B cell (primary cell): ENCODE measurements at regions of chr10 and their contacts with region 1.

Region 1: DNA sequence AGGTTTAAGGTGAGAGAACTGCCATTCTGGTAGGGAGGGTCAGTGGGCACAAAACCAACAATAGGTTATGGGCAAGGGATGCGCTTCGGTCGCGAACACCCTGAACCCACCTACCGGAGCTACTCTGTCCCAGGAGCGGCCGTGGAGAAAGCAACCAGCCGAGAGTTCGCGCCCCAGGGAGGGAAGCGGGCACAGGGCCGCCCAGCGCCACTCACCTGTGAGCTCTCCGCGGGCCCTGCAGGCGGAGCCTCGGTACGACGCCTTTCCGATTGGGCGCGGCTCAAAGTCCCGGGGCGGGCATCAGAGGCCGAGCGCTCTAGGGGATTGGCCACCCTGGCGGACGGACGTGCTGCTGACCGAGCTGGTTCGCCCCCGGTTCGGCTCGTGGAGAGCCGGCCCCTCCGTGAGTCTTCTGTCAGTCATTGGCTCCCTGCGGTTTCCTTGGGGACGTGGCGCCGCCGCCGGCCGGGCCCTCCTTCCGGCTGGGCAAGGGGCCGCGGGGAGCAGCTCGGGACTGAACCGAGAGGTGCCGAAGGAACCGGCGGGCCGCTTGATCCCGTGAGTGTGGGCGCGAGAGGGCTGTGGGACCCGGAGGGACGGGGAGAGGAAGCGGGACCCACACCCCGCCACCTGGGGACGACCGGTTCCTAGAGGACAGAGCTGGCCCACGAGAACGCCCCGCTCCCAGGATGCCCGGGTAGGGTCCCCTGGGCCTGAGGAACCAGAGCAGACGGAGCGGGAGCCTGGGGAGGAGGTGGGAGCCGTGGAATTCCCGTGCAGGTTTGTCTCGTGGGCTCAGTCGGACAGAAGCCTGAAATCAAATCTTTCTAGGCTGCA is at the start of gene ENTPD7:
- DNase-seq: peak; percentile 91
- ATAC-seq: peak; percentile 99
- H3K4me3 ChIP-seq: peak within 1 kb of the TSS; percentile 63 to 89 (median 82)
- H3K4me3 Mint-ChIP-seq: peak within 1 kb of the TSS; percentile 84
- H3K27ac ChIP-seq: peak within 1 kb of the TSS in 1 of 2 donors; percentile 64
- H3K27ac Mint-ChIP-seq: peak within 1 kb of the TSS; percentile 32
- H3K4me1 ChIP-seq: peaks cover 7 to 16% of the 10 kb centered on the region in 2 donors
- H3K4me1 Mint-ChIP-seq: peaks cover 19% of the 10 kb centered on the region
- H3K27me3 ChIP-seq: peaks cover 0 to 4% (median 0%) of the 10 kb centered on the region in 4 experiments
- H3K27me3 Mint-ChIP-seq: peaks cover 9% of the 10 kb centered on the region
- CTCF ChIP-seq: peak; percentile 19
- total RNA-seq, gene ENTPD7: 6.0 and 6.2 TPM in 2 replicates

Region 2: GRCh38 chr10:99732033-99732912 is 73.0 kb after region 1 on chr10 and contains the starts of genes COX15 and CUTC:
- CTCF ChIA-PET with region 1: interaction called, 4 read pairs
- POLR2A ChIA-PET with region 1: no interaction called
- intact Hi-C with region 1: loop called (anchors 1 kb)
- DNase-seq: peak; percentile 95
- ATAC-seq: peak; percentile 93
- H3K4me3 ChIP-seq: peak within 1 kb of the TSS; percentile 84 to 99 (median 93)
- H3K4me3 Mint-ChIP-seq: peak within 1 kb of the TSS; percentile 95
- H3K27ac ChIP-seq: peak within 1 kb of the TSS; percentile 82 to 83
- H3K27ac Mint-ChIP-seq: peak within 1 kb of the TSS; percentile 99
- H3K4me1 ChIP-seq: peaks cover 13 to 24% of the 10 kb centered on the region in 2 donors
- H3K4me1 Mint-ChIP-seq: peaks cover 32% of the 10 kb centered on the region
- H3K27me3 ChIP-seq: no peaks in the 10 kb centered on the region
- H3K27me3 Mint-ChIP-seq: no peaks in the 10 kb centered on the region
- CTCF ChIP-seq: peak; percentile 64
- total RNA-seq, gene COX15: 39.5 and 47.4 TPM in 2 replicates
- total RNA-seq, gene CUTC: 32.0 and 33.3 TPM in 2 replicates